ENCODE measurements at regions of chr6 and their contacts with region 1.

Region 1: GRCh38 chr6:31079656-31080261 is 32.6 kb downstream of the C6orf15 start:
- DNase-seq: peak; percentile 61 to 89
- H3K4me3 ChIP-seq: no peak overlapping the region
- CTCF ChIP-seq: no peak
- POLR2A ChIP-seq: no peak

Region 2: GRCh38 chr6:29777310-29777709 is 1302.4 kb before region 1 on chr6:
- intact Hi-C with region 1: no loop called
- DNase-seq: no peak
- H3K4me3 ChIP-seq: no peak overlapping the region
- CTCF ChIP-seq: no peak
- POLR2A ChIP-seq: no peak

Region 3: GRCh38 chr6:30844091-30844535 is 235.6 kb before region 1 on chr6:
- intact Hi-C with region 1: loop called (anchors 5 kb)
- DNase-seq: no peak
- H3K4me3 ChIP-seq: no peak overlapping the region
- CTCF ChIP-seq: no peak
- POLR2A ChIP-seq: no peak

Measured in lower leg skin (tissue), 4 donors.